Right lobe of liver (tissue), 6 donors: ENCODE measurements at regions of chr11 and their contacts with region 1.

Region 1: DNA sequence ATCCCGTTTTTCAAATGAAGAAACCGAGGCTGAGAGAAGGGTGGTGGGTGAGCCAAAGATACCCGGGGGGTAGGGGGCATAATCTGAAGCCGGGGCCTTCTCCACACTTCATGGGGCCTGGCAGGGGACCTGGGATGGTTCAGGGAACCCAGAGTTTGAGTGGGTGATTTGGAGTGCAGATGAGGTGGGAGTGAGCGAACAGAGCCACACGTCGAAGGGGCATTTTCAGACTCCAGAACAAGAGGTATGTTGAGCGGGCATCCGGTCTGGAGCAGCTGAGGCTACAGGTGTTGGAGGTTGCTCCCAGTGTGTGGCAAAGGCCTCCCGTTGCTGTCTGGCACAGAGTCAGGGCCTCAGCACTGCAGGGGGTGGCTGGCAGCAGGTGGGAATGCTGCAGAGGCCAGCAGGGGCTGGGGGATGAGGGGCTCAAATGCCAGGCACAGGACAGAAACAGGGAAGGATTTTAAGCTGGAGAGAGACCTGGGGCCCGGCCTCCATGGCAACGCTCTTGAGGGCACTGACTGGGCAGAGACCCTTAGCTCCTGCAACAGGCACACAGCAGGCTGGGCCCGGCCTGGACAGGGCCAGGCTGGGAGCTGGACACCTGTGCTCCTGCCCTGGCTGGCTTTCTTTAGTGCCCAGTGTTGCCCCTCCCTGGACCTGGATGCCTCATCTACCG is 46.2 kb downstream of the WNT11 start:
- DNase-seq: peak in 1 of 3 donors; percentile 27
- ATAC-seq: no peak
- H3K4me3 ChIP-seq: no peak overlapping the region
- H3K27ac ChIP-seq: no peak overlapping the region
- H3K4me1 ChIP-seq: no peaks in the 10 kb centered on the region
- H3K27me3 ChIP-seq: no peaks in the 10 kb centered on the region
- CTCF ChIP-seq: no peak
- POLR2A ChIP-seq: no peak

Region 2: DNA sequence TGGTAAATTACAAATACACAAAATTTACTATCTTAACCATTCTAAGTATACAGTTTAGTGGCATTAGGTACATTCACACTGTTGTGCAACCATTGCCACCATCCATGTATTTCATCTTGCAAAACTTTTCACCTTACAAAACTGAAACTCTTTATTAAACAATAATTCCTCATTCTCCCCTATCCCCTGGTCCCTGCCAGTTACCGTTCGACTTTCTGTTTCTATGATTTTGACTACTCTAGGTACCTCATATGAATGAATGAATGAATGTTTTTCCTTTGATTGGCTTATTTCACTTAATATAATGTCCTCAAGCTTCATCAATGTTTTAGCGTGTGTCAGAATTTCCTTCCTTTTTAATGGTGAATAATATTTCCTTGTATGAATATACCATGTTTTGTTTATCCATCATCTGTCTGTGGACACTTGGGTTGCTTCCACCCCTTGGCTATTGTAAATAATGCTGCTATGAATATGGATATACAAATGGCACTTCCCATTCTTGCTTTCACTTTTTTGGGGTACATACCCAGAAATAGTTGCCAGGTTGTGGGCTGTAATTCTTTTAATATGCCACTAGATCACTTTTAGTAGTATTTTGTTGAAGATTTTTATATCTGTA is 252.1 kb before region 1 on chr11:
- intact Hi-C with region 1: loop called in 1 of 2 experiments (anchors 5 kb)
- DNase-seq: no peak
- ATAC-seq: no peak
- H3K4me3 ChIP-seq: no peak overlapping the region
- H3K27ac ChIP-seq: no peak overlapping the region
- H3K4me1 ChIP-seq: no peaks in the 10 kb centered on the region
- H3K27me3 ChIP-seq: no peaks in the 10 kb centered on the region
- CTCF ChIP-seq: no peak
- POLR2A ChIP-seq: no peak

Region 3: DNA sequence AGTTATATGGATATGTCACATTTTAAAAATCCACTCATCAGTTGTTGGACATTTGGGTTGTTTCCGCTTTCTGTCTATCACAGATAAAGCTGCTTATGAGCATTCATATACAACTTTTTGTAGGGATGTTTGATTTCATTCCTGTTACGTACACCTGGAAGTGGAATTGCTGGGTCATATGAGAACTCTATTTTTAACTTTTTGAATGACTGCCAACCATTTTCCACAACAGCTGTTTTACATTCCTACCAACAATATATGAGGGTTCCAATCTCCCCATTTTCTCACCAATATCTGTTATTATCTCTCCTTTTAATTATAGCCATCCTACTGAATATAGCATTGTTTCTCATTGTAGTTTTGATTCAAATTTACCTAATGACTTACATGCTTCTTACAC is 173.2 kb before region 1 on chr11:
- intact Hi-C with region 1: no loop called
- DNase-seq: no peak
- ATAC-seq: no peak
- H3K4me3 ChIP-seq: no peak overlapping the region
- H3K27ac ChIP-seq: no peak overlapping the region
- H3K4me1 ChIP-seq: no peaks in the 10 kb centered on the region
- H3K27me3 ChIP-seq: no peaks in the 10 kb centered on the region
- CTCF ChIP-seq: no peak
- POLR2A ChIP-seq: no peak

Region 4: DNA sequence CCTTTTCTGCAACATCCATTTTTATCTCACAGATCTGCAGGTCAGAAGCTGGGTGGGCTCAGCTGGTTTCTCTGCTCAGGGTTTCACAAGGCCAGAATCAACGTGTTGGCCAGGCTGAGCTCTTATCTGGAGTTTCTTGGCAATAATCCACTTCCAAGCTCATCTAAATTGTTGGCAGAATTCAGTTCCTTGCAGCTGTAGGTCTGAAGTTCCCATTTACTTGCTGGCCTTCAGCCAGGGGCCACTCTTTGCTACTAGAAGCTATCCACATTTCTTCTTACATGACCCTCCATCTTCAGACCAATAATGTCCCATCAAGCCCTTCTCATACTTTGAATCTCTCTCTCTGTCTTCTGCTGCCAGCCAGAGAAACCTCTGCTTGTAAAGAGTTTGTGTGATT is 57.3 kb before region 1 on chr11:
- intact Hi-C with region 1: no loop called
- DNase-seq: no peak
- ATAC-seq: peak in 1 of 4 donors; percentile 45
- H3K4me3 ChIP-seq: no peak overlapping the region
- H3K27ac ChIP-seq: no peak overlapping the region
- H3K4me1 ChIP-seq: no peaks in the 10 kb centered on the region
- H3K27me3 ChIP-seq: no peaks in the 10 kb centered on the region
- CTCF ChIP-seq: no peak
- POLR2A ChIP-seq: no peak

Region 5: GRCh38 chr11:76339221-76339620 is 179.1 kb after region 1 on chr11:
- intact Hi-C with region 1: no loop called
- DNase-seq: peak in 1 of 3 donors; percentile 30
- ATAC-seq: peak; percentile 66 to 83 (median 72)
- H3K4me3 ChIP-seq: no peak overlapping the region
- H3K27ac ChIP-seq: no peak overlapping the region
- H3K4me1 ChIP-seq: no peaks in the 10 kb centered on the region
- H3K27me3 ChIP-seq: no peaks in the 10 kb centered on the region
- CTCF ChIP-seq: no peak
- POLR2A ChIP-seq: no peak

Region 6: GRCh38 chr11:76501526-76502210 is 341.5 kb after region 1 on chr11:
- intact Hi-C with region 1: no loop called
- DNase-seq: no peak
- ATAC-seq: no peak
- H3K4me3 ChIP-seq: no peak overlapping the region
- H3K27ac ChIP-seq: no peak overlapping the region
- H3K4me1 ChIP-seq: no peaks in the 10 kb centered on the region
- H3K27me3 ChIP-seq: no peaks in the 10 kb centered on the region
- CTCF ChIP-seq: no peak
- POLR2A ChIP-seq: no peak